ENCODE measurements at regions of chr11 and their contacts with region 1.

Region 1: DNA sequence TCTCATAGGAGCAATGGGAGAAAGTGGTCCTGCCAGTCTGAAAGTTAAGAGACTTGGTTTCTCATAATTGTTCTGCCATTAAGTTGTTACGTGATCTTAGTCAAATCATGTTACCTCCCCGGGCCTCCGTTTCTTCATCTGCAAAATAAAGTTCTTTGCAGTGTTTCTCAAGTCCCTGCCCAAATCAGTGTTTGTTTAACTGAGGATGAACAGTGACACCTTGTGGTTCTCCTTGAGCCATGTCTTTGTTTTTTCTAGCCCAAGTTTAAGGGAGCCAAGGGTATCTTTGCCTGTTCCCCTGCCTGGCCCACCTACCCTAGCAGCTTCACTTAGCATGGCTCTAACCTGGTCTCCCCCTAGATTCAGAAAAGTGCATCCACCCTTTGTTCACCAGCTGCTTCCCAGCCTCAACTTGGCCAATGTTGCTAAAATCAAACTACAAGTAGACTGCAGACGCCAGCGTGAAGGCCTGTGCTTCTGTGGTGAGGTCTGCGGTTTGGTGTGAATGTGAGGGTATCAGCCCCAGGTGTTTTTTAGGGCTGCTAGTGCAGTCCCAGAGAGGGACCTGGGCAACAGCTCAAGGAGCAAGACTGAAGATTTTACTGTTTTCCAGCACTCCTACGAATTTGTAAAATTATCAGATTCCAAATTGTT is 35.5 kb downstream of the FZD4 start:
- DNase-seq: no peak
- H3K4me3 ChIP-seq: no peak overlapping the region
- H3K27ac ChIP-seq: peak overlapping the region in 5 of 59 donors; percentile 14 to 60 (median 46)
- H3K27me3 ChIP-seq: no peaks in the 10 kb centered on the region
- CTCF ChIP-seq: peak; percentile 39 to 80 (median 66)

Region 2: GRCh38 chr11:86608251-86608799 is 311.4 kb before region 1 on chr11:
- intact Hi-C with region 1: no loop called
- DNase-seq: peak in 4 of 10 donors; percentile 37 to 60 (median 50)
- H3K4me3 ChIP-seq: peak overlapping the region in 8 of 59 donors; percentile 9 to 44 (median 19)
- H3K27ac ChIP-seq: peak overlapping the region in 1 of 59 donors; percentile 51
- H3K27me3 ChIP-seq: no peaks in the 10 kb centered on the region
- CTCF ChIP-seq: peak in 55 of 56 donors; percentile 60 to 94 (median 82)

Region 3: GRCh38 chr11:86869966-86870570 is 49.6 kb before region 1 on chr11:
- intact Hi-C with region 1: loop called (anchors 2 to 5 kb)
- DNase-seq: peak in 7 of 10 donors; percentile 32 to 68 (median 48)
- H3K4me3 ChIP-seq: no peak overlapping the region
- H3K27ac ChIP-seq: no peak overlapping the region
- H3K27me3 ChIP-seq: no peaks in the 10 kb centered on the region
- CTCF ChIP-seq: peak; percentile 62 to 89 (median 79)